MCF 10A (cell line): ENCODE measurements at regions of chr10 and their contacts with region 1.

Region 1: GRCh38 chr10:122468926-122469781 is 7.8 kb downstream of the HTRA1 start:
- DNase-seq: peak; percentile 99
- H3K4me3 Mint-ChIP-seq: peak overlapping the region; percentile 40
- H3K27ac Mint-ChIP-seq: peak overlapping the region; percentile 82
- H3K4me1 Mint-ChIP-seq: peaks cover 41% of the 10 kb centered on the region
- H3K27me3 Mint-ChIP-seq: no peaks in the 10 kb centered on the region
- CTCF ChIP-seq: no peak

Region 2: DNA sequence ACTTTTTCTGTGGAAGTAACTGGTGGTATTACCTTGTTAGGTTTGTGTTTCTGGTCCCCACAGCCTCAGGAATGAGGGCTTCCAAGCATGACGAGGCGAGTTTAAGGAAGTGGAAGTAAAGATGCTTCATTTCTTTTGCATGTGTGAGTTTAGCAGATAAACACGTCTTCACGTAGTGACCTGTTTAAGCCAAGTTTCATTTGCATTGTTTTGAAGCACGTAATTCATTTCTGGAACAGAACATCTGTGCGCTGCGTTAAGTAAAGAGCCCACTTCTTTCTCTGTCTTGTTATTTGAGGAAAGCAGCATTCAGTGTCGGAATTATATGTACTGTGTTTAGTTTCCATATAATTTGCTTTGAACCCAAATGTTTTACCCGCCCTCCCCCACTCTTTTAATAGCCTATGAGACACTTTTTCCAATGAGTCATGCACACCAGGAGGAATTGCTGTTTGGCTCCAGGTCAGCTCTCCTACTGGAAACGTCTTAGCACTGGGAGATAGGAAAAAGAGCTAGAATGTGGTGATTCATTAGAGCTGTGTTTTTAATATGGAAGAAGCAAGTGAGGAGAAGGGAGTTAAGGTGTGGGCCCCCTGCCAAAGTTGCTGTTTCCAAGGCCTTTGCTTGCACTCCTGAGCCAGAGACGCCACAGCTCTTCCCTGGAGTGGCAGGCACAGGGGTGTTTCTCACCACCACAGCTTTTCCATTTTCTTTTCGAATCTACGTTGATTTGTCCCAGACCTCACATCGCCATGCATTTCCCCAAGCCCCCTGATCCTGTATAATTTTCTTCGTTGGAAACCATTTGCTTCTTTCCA is 161.3 kb before region 1 on chr10:
- CTCF ChIA-PET with region 1: interaction called, 7 read pairs
- POLR2A ChIA-PET with region 1: interaction called, 11 read pairs
- intact Hi-C with region 1: no loop called
- DNase-seq: peak; percentile 98
- H3K4me3 Mint-ChIP-seq: peak overlapping the region; percentile 64
- H3K27ac Mint-ChIP-seq: peak overlapping the region; percentile 94
- H3K4me1 Mint-ChIP-seq: peaks cover 22% of the 10 kb centered on the region
- H3K27me3 Mint-ChIP-seq: no peaks in the 10 kb centered on the region
- CTCF ChIP-seq: no peak

Region 3: GRCh38 chr10:122441961-122442360 is 27.2 kb before region 1 on chr10:
- CTCF ChIA-PET with region 1: interaction called, 7 read pairs
- POLR2A ChIA-PET with region 1: interaction called, 19 read pairs
- intact Hi-C with region 1: no loop called
- DNase-seq: peak; percentile 74
- H3K4me3 Mint-ChIP-seq: peak overlapping the region; percentile 43
- H3K27ac Mint-ChIP-seq: peak overlapping the region; percentile 85
- H3K4me1 Mint-ChIP-seq: peaks cover 14% of the 10 kb centered on the region
- H3K27me3 Mint-ChIP-seq: no peaks in the 10 kb centered on the region
- CTCF ChIP-seq: no peak

Region 4: DNA sequence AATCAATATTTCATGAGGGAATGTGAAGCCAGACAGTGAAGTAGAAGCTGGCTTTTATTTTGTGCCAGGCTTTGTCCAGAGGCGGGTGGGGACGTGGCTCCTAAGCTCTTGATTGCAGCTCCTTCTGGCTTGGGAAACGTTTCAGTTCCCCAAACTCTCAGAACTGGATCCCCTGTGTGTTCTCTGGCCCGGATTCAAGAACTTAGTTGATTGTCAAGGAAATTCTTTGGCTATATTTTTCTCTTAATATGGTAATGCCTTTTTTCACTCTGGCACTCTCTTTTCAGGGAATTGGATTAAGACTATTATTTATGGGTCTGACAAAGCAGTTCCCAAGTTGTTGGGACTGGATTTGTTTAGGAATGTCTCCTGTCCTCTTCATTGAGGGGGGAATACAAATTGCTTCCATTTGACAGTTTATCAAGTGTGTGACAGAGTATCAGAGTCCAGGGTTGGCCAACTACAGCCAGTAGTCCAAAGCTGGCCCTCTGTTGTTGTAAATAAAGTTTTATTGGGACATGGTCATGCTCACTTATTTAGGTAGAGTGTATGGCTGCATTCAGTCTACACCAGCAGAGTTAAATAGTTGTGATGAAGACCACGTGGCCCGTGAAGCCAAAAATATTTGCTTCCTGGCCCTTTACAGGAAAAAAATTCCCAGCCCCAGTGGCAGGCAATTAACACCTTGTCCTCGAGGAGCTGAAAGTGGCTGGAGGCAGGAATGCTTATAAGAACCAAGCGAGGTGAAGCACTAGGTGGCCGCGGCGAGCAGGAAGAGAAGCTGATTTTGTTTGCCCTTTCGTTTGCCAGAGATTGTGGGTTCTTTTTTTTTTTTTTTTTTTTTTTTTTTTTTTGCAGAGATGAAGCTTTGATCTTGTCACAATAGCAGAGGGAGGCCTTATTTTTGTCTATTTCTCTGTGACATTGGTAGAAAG is 26.5 kb after region 1 on chr10:
- CTCF ChIA-PET with region 1: interaction called, 39 read pairs
- POLR2A ChIA-PET with region 1: interaction called, 291 read pairs
- intact Hi-C with region 1: no loop called
- DNase-seq: peak; percentile 77
- H3K4me3 Mint-ChIP-seq: peak overlapping the region; percentile 60
- H3K27ac Mint-ChIP-seq: peak overlapping the region; percentile 92
- H3K4me1 Mint-ChIP-seq: peaks cover 71% of the 10 kb centered on the region
- H3K27me3 Mint-ChIP-seq: no peaks in the 10 kb centered on the region
- CTCF ChIP-seq: no peak

Region 5: GRCh38 chr10:122504610-122504950 is 35.4 kb after region 1 on chr10:
- CTCF ChIA-PET with region 1: interaction called, 3 read pairs
- POLR2A ChIA-PET with region 1: interaction called, 18 read pairs
- intact Hi-C with region 1: loop called (anchors 2 kb)
- DNase-seq: peak; percentile 94
- H3K4me3 Mint-ChIP-seq: peak overlapping the region; percentile 16
- H3K27ac Mint-ChIP-seq: no peak overlapping the region
- H3K4me1 Mint-ChIP-seq: peaks cover 25% of the 10 kb centered on the region
- H3K27me3 Mint-ChIP-seq: no peaks in the 10 kb centered on the region
- CTCF ChIP-seq: no peak

Region 6: DNA sequence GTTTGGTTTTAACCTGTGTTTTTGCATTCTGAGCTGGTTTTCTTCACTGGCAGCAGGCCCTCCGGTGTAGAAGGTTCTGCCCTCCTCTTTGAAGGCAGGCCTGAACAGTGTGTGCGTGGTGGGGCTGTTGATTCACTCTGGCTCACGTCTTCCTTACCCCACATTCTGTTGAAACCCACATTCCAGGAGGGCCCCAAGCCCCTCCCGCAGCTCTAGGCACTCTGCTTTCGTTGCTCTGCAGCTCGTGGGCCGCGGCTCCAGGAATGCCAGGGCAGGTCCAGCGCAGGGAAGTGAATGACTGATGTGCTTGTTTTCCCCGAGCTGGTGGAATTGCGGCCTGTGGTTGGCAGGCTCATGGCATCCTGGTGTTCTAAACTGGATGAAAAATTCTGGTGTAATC is 41.2 kb after region 1 on chr10:
- CTCF ChIA-PET with region 1: interaction called, 3 read pairs
- POLR2A ChIA-PET with region 1: interaction called, 20 read pairs
- intact Hi-C with region 1: loop called (anchors 2 kb)
- DNase-seq: peak; percentile 88
- H3K4me3 Mint-ChIP-seq: peak overlapping the region; percentile 24
- H3K27ac Mint-ChIP-seq: peak overlapping the region; percentile 87
- H3K4me1 Mint-ChIP-seq: peaks cover 19% of the 10 kb centered on the region
- H3K27me3 Mint-ChIP-seq: no peaks in the 10 kb centered on the region
- CTCF ChIP-seq: no peak

Region 7: DNA sequence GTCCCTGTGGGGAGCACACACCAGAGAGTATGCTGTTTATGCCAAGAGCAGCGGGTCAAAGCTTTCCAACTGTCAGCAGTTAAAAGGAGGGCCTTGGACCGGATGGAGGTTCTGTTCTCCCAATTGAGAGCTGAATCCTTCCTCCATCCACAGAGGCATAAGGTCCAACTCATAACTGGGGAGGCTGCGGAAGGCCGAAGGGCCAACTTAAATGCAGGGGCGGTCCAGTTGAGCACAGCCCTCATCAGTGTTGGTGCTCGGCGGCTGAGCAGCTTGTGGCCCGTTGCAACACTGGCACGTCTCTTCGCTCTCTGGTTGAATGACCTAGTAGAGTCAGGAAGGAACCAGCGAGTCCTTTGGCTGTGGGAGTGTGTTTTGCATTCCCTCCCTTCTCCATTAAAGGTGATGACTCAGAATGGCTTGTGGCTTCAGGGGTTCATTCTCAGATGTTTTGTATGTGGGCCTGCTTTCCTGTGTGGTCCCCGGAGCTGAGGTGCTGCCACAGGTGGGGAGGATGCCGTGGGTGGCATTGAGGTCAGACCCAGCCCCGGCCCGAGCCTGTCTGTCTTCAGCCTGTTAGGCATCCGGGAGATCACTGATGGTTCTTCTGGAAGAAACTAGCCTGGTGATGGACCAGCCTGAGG is 46.6 kb after region 1 on chr10:
- CTCF ChIA-PET with region 1: interaction called, 3 read pairs
- POLR2A ChIA-PET with region 1: interaction called, 20 read pairs
- intact Hi-C with region 1: no loop called
- DNase-seq: peak; percentile 75
- H3K4me3 Mint-ChIP-seq: no peak overlapping the region
- H3K27ac Mint-ChIP-seq: no peak overlapping the region
- H3K4me1 Mint-ChIP-seq: peaks cover 12% of the 10 kb centered on the region
- H3K27me3 Mint-ChIP-seq: no peaks in the 10 kb centered on the region
- CTCF ChIP-seq: no peak